ENCODE measurements at regions of chrX and their contacts with region 1.

Region 1: GRCh38 chrX:15789979-15790768 is at the start of gene ZRSR2:
- DNase-seq: peak; percentile 76 to 95 (median 86)
- ATAC-seq: peak; percentile 86 to 87
- H3K4me3 Mint-ChIP-seq: no peak within 1 kb of the TSS
- H3K27ac Mint-ChIP-seq: no peak within 1 kb of the TSS
- H3K4me1 Mint-ChIP-seq: peaks cover 6 to 23% (median 22%) of the 10 kb centered on the region in 4 donors
- H3K27me3 Mint-ChIP-seq: no peaks in the 10 kb centered on the region
- polyA plus RNA-seq, gene ZRSR2: 15.1 to 44.8 (median 27.7) TPM

Region 2: DNA sequence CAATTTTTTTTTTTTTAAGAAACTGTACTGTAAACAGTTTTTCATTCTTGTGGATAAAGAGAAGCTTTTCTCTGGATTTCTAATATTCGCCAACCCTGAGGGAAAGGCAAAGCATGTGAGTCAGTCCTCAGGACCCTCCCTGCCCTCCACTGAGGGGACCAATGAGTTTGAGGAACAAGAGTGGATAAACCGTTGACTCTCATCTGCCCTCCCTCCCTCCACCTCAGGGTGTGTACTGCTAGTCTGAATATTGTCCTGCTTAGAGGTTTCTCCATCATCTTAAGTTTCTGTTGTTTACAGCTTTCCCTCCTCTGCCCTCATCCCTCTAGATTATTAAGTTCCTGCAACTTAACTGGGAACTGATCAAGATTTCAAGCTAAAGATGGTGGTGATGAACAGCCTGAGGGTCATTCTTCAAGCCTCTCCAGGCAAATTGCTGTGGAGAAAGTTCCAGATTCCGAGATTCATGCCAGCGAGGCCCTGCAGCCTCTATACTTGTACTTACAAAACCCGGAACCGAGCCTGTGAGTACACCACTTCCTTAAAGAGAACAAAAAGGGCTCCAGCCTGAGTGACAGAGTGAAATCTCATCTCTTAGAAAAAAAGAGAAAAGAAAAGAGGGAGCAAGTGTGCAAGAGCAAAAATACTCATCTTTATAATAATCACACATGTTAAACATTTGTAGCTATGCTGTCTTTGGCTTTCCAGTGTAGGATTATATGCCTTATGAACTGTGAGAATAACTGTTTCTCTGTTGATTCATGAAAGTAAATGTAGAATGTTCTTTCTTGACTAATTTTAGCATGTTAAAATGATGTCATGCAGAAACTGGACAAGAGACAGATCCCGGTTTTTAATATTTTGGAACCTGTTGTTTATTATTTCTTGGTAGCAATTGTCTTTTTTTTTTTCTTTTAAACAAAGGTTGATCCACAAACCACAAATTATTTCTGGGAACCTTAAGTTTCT is 40.2 kb before region 1 on chrX:
- POLR2A ChIA-PET with region 1: interaction called, 19 read pairs
- DNase-seq: peak in 6 of 10 donors; percentile 31 to 66 (median 53)
- ATAC-seq: peak; percentile 51 to 52
- H3K4me3 Mint-ChIP-seq: peak overlapping the region; percentile 60 to 86 (median 76)
- H3K27ac Mint-ChIP-seq: peak overlapping the region; percentile 95 to 100 (median 98)
- H3K4me1 Mint-ChIP-seq: peaks cover 16 to 92% (median 72%) of the 10 kb centered on the region in 4 donors
- H3K27me3 Mint-ChIP-seq: no peaks in the 10 kb centered on the region

Region 3: DNA sequence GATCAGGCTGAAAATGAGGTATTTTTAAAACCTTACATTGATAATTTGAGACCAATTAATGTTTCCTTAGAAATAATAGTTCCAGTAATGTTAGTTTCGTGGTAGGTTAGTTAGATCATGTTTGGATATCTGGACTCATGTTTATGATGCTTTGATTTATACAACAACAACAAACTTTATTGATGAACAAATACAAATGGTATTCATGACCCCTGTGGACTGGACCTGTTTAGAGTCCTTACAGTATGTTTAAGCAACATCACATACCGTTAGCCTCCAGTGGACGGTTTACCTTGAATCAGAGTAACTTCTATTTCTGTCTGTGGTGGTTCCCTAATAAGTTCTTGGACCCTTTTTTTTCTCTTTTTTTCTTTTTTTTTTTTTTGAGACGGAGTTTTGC is 18.1 kb after region 1 on chrX:
- POLR2A ChIA-PET with region 1: no interaction called
- DNase-seq: no peak
- ATAC-seq: no peak
- H3K4me3 Mint-ChIP-seq: no peak overlapping the region
- H3K27ac Mint-ChIP-seq: no peak overlapping the region
- H3K4me1 Mint-ChIP-seq: peaks cover 0 to 3% (median 3%) of the 10 kb centered on the region in 4 donors
- H3K27me3 Mint-ChIP-seq: no peaks in the 10 kb centered on the region

Region 4: GRCh38 chrX:15854712-15855567 is 64.8 kb after region 1 on chrX and contains the start of gene AP1S2:
- POLR2A ChIA-PET with region 1: interaction called, 20 read pairs
- DNase-seq: peak; percentile 88 to 99 (median 93)
- ATAC-seq: peak; percentile 93
- H3K4me3 Mint-ChIP-seq: peak within 1 kb of the TSS; percentile 90 to 99 (median 94)
- H3K27ac Mint-ChIP-seq: peak within 1 kb of the TSS; percentile 93 to 100 (median 98)
- H3K4me1 Mint-ChIP-seq: peaks cover under 1 to 28% (median 13%) of the 10 kb centered on the region in 4 donors
- H3K27me3 Mint-ChIP-seq: no peaks in the 10 kb centered on the region
- polyA plus RNA-seq, gene AP1S2: 31.2 to 47.8 (median 35.3) TPM

Measured in naive thymus-derived CD8-positive, alpha-beta T cell (primary cell).